HEK293 (cell line): ENCODE measurements at regions of chrX and their contacts with region 1.

Region 1: DNA sequence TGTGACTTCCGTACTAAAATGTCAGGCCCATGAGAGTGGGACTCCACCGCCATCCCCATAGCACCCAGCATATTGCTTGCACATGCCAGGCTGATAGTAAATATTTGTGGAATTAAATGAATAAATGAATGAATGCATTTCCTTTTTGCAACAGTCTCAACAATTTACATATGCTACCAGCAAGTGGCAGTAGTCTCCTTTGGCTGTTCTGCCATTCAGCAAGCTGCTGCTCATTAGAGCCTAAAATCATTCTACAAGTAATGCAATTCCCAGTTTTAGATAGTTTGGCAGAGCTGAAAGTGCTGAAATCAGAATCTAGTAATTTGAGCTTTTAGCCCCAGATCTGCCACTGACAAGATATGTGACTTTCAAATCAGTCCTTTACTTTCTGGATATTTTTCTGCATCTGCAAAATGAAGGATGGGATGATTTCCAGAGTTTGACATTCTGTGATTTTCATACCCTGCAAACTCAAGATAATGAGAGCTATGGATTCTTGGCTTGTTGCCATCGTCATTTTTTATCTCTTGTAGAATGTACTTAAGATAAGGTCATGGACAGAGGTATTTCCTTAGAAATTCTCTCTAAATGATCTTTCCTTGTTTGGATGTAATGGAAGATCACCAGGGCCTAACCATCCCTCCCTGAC is 35.7 kb upstream of the INTS6L start:
- H3K4me3 ChIP-seq: no peak overlapping the region
- H3K27ac ChIP-seq: no peak overlapping the region
- H3K4me1 ChIP-seq: no peaks in the 10 kb centered on the region
- CTCF ChIP-seq: peak; percentile 55; the same call in 1 of the 2 replicates

Region 2: DNA sequence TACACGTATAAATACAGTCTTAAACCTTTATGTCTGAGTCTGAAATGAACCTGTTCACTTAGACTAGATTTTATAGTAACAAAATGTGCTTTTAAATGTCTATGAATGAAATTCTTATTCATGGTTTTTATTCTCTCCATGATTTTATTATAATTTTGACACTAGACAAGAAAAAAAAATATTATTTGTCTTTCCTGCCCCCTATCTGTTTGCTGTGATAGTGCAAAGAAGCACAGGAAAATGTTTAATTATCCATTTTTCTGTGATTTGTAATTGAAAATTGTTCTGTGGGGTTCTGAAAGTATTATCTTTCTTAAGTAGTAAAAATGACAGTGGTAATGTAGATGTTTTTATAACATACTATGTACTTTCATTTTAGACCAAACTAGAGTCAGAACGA is 87.7 kb after region 1 on chrX:
- CTCF ChIA-PET with region 1: interaction called, 14 read pairs
- POLR2A ChIA-PET with region 1: no interaction called
- H3K4me3 ChIP-seq: no peak overlapping the region
- H3K27ac ChIP-seq: no peak overlapping the region
- H3K4me1 ChIP-seq: no peaks in the 10 kb centered on the region
- CTCF ChIP-seq: no peak